GM12878 (cell line): ENCODE measurements at regions of chr1 and their contacts with region 1.

Region 1: DNA sequence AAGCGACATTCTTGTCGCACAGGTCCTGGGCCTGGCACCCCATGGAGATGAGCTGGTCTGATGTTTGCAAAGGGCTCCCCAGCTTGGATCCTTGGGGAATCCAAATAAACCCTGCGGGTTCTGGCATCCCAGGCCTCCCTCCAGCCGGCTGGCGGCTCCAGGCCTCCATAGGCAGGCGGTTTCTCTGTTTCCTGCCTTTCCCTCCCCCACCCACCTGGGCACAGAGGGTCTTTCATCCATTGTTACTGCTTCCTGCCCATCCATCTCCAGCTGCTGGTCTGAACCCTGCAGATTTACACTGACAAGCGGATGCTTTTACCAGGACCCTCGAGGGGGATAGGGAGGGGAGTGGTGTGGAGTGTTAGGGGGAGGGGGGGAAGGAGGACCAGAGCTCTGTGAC is 39.1 kb upstream of the ID3 start:
- DNase-seq: no peak
- ATAC-seq: no peak
- H3K4me3 ChIP-seq: no peak overlapping the region
- H3K27ac ChIP-seq: no peak overlapping the region
- H3K4me1 ChIP-seq: peaks cover 79% of the 10 kb centered on the region
- H3K27me3 ChIP-seq: no peaks in the 10 kb centered on the region
- CTCF ChIP-seq: no peak
- EP300 ChIP-seq: no peak
- POLR2A ChIP-seq: no peak
- RAD21 ChIP-seq: no peak

Region 2: GRCh38 chr1:23273450-23274133 is 324.8 kb before region 1 on chr1:
- CTCF ChIA-PET with region 1: no interaction called
- POLR2A ChIA-PET with region 1: no interaction called
- RAD21 ChIA-PET with region 1: no interaction called
- SMC1A ChIA-PET with region 1: no interaction called
- in situ Hi-C with region 1: no loop called
- intact Hi-C with region 1: no loop called
- DNase-seq: no peak
- ATAC-seq: no peak
- H3K4me3 ChIP-seq: no peak overlapping the region
- H3K27ac ChIP-seq: no peak overlapping the region
- H3K4me1 ChIP-seq: no peaks in the 10 kb centered on the region
- H3K27me3 ChIP-seq: no peaks in the 10 kb centered on the region
- CTCF ChIP-seq: no peak
- EP300 ChIP-seq: no peak
- POLR2A ChIP-seq: no peak
- RAD21 ChIP-seq: no peak

Region 3: GRCh38 chr1:23548704-23549143 is 49.7 kb before region 1 on chr1:
- CTCF ChIA-PET with region 1: interaction called, 108 read pairs
- POLR2A ChIA-PET with region 1: interaction called, 206 read pairs
- RAD21 ChIA-PET with region 1: interaction called, 5 read pairs
- SMC1A ChIA-PET with region 1: interaction called, 29 read pairs
- in situ Hi-C with region 1: no loop called
- intact Hi-C with region 1: no loop called
- DNase-seq: no peak
- ATAC-seq: peak; percentile 52
- H3K4me3 ChIP-seq: no peak overlapping the region
- H3K27ac ChIP-seq: no peak overlapping the region
- H3K4me1 ChIP-seq: peaks cover 21% of the 10 kb centered on the region
- H3K27me3 ChIP-seq: no peaks in the 10 kb centered on the region
- CTCF ChIP-seq: no peak
- EP300 ChIP-seq: no peak
- POLR2A ChIP-seq: no peak
- RAD21 ChIP-seq: no peak

Region 4: GRCh38 chr1:23613191-23614031 is 15.0 kb after region 1 on chr1:
- CTCF ChIA-PET with region 1: interaction called, 9 read pairs
- POLR2A ChIA-PET with region 1: interaction called, 55 read pairs
- RAD21 ChIA-PET with region 1: interaction called, 26 read pairs
- SMC1A ChIA-PET with region 1: interaction called, 22 read pairs
- in situ Hi-C with region 1: no loop called
- intact Hi-C with region 1: no loop called
- DNase-seq: no peak
- ATAC-seq: peak; percentile 63
- H3K4me3 ChIP-seq: no peak overlapping the region; the same call in 1 of the 2 replicates
- H3K27ac ChIP-seq: peak overlapping the region; percentile 80
- H3K4me1 ChIP-seq: peaks cover 37% of the 10 kb centered on the region
- H3K27me3 ChIP-seq: no peaks in the 10 kb centered on the region
- CTCF ChIP-seq: 0 out of 6 replicates have a peak, but pooled peaks of 1 of the 3 experiments have one; percentile 9
- EP300 ChIP-seq: no peak
- POLR2A ChIP-seq: no peak
- RAD21 ChIP-seq: no peak

Region 5: DNA sequence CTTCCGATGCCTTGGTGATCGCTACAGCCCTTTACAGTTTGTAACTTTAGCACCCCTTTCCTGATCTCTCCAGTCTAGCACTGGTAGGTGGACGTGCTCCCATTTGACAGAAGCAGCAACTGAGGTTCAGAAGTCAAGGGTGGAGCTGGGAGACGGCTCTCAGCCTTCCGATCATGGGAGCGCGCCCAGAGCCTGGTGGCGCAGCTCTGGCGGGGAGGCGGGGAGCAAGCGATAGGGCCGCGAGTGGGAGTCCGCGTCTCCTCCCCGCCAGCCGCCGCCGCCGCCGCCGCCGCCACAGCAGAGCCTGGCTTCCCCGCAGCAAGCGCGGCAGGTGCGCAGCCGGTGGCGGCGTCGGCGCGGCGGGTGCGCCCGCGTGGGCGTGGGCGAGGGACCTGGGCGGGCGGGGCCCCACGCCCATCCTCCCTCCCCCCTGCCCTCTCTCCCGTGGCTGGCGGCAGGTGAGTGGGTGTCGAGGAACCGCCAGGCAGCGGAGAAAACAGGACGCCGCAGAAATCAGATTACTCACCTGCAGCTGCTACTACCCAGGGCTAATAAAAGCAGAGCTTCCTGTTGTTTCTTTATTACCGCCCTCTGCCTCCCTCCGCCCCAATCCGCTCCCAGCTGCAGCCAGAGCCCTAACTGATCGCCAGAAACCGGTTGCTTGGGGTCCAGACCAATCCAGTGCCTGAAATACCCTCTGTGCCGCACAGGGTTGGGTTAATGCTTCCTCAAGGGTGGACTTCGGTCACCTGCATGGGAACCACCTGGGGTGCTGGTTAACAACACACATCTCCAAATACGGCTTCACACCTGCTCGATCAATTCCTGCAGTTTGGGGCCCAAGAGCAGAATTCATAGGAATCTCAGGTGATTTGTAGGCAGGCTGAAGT is 21.1 kb after region 1 on chr1:
- CTCF ChIA-PET with region 1: interaction called, 7 read pairs
- POLR2A ChIA-PET with region 1: interaction called, 55 read pairs
- RAD21 ChIA-PET with region 1: interaction called, 26 read pairs
- SMC1A ChIA-PET with region 1: interaction called, 7 read pairs
- in situ Hi-C with region 1: no loop called
- intact Hi-C with region 1: no loop called
- DNase-seq: no peak
- ATAC-seq: peak; percentile 82
- H3K4me3 ChIP-seq: peak overlapping the region; percentile 64
- H3K27ac ChIP-seq: peak overlapping the region; percentile 51
- H3K4me1 ChIP-seq: peaks cover 36% of the 10 kb centered on the region
- H3K27me3 ChIP-seq: no peaks in the 10 kb centered on the region
- CTCF ChIP-seq: no peak
- EP300 ChIP-seq: peak; percentile 50 to 67; a peak in 1 of 4 replicates
- POLR2A ChIP-seq: peak; percentile 64
- RAD21 ChIP-seq: no peak